Ovary (tissue), 10 donors: ENCODE measurements at regions of chr7 and their contacts with region 1.

Region 1: DNA sequence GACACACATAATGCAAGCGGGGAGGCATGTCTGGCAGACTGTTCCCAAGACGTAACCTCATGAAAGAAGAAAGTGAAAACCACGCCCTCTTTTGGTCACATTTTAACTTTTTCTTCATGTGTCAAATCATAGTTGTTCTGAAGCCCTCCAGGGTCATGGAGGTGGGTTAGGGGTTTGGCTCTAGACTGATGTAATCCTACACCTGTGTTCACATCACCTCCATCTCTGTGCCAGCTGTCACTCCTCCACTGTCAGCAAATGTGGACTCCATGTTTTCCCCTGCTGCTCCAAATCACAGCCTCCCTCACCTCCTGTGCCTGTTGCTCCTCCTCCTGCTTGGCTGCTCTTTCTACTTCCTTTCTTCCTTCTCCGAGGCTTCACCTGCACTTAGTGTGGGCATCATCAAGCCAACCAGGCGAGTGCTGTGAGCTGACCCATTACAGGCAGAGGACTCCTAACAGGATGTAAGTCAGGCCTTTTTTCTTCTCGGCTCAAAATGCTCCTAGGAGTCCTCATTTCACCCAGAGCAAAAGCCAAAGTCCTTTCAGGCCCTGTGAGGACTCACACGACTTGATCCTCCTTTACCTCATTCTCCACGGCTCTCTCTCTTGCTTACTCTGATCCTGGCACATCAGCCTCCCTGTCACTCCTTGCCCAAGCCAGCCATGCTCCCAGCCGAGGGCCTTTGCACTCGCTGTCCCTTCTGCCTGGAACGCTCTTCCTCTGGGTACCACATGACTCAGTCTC is 66.4 kb upstream of the IFRD1 start:
- DNase-seq: no peak
- H3K4me3 ChIP-seq: no peak overlapping the region
- H3K27ac ChIP-seq: no peak overlapping the region
- H3K4me1 ChIP-seq: no peaks in the 10 kb centered on the region
- H3K27me3 ChIP-seq: no peaks in the 10 kb centered on the region
- CTCF ChIP-seq: no peak
- EP300 ChIP-seq: no peak
- POLR2A ChIP-seq: no peak

Region 2: DNA sequence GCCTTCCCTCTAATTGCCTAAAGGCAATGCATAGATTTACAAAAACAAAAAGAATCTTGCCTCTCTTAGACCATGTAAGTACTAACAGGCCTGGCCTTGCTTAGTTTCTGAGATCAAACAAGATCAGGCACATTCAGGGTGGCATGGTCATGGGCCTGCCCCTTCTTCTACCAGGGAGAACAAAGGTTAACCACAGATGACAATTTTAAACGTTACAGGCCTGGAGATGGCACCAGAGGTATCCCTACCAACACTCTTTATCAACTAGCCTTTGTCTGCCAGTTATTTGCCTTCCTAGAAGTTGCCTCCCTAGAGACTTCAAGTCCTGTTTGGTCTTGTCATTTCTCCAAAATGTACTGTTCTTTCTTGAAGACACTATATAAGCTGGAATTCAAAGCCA is 430.2 kb before region 1 on chr7:
- intact Hi-C with region 1: loop called in 1 of 4 experiments (anchors 10 kb)
- DNase-seq: no peak
- H3K4me3 ChIP-seq: no peak overlapping the region
- H3K27ac ChIP-seq: peak overlapping the region in 1 of 2 donors; percentile 59
- H3K4me1 ChIP-seq: peaks cover 9% of the 10 kb centered on the region
- H3K27me3 ChIP-seq: no peaks in the 10 kb centered on the region
- CTCF ChIP-seq: no peak
- EP300 ChIP-seq: no peak
- POLR2A ChIP-seq: no peak

Region 3: GRCh38 chr7:112437043-112437442 is 53.2 kb after region 1 on chr7:
- intact Hi-C with region 1: no loop called
- DNase-seq: no peak
- H3K4me3 ChIP-seq: no peak overlapping the region
- H3K27ac ChIP-seq: no peak overlapping the region
- H3K4me1 ChIP-seq: no peaks in the 10 kb centered on the region
- H3K27me3 ChIP-seq: no peaks in the 10 kb centered on the region
- CTCF ChIP-seq: no peak
- EP300 ChIP-seq: no peak
- POLR2A ChIP-seq: no peak